Left ventricle myocardium inferior (tissue), 1 donor: ENCODE measurements at regions of chr20 and their contacts with region 1.

Region 1: DNA sequence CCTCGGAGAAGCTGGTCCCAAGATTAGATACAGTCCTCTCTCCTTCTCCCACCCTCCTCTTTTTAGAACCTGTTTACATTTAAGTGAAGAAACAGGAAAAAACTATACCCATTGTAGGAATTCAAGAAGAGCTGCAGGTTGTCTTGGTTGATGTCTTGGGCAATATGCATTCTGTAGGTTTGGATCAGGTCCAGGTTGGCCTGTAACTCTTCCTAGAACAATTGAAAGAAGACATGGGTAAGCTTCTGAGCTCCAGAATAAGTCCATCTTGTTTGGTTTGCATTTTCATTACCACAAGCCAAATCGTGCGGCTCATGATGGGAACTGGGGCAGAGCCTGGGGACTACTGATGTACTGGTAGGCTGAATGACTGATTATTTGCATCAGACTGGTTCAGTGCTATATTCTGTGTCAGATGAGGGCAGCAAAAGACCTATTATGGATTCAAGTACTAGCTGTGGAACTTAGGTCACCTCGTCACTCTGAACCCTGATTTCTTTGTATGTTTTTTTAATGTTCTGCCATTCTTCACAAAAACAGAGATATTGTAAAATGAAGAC is 20.3 kb upstream of the SLA2 start:
- DNase-seq: no peak
- H3K4me3 ChIP-seq: no peak overlapping the region
- H3K27ac ChIP-seq: no peak overlapping the region
- H3K4me1 ChIP-seq: no peaks in the 10 kb centered on the region
- H3K27me3 ChIP-seq: no peaks in the 10 kb centered on the region
- CTCF ChIP-seq: peak; percentile 33

Region 2: GRCh38 chr20:36886859-36887751 is 220.8 kb after region 1 on chr20:
- intact Hi-C with region 1: loop called (anchors 10 kb)
- DNase-seq: peak; percentile 79
- H3K4me3 ChIP-seq: peak overlapping the region; percentile 26
- H3K27ac ChIP-seq: no peak overlapping the region
- H3K4me1 ChIP-seq: peaks cover 10% of the 10 kb centered on the region
- H3K27me3 ChIP-seq: no peaks in the 10 kb centered on the region
- CTCF ChIP-seq: peak; percentile 96